ENCODE measurements at regions of chr11 and their contacts with region 1.

Region 1: DNA sequence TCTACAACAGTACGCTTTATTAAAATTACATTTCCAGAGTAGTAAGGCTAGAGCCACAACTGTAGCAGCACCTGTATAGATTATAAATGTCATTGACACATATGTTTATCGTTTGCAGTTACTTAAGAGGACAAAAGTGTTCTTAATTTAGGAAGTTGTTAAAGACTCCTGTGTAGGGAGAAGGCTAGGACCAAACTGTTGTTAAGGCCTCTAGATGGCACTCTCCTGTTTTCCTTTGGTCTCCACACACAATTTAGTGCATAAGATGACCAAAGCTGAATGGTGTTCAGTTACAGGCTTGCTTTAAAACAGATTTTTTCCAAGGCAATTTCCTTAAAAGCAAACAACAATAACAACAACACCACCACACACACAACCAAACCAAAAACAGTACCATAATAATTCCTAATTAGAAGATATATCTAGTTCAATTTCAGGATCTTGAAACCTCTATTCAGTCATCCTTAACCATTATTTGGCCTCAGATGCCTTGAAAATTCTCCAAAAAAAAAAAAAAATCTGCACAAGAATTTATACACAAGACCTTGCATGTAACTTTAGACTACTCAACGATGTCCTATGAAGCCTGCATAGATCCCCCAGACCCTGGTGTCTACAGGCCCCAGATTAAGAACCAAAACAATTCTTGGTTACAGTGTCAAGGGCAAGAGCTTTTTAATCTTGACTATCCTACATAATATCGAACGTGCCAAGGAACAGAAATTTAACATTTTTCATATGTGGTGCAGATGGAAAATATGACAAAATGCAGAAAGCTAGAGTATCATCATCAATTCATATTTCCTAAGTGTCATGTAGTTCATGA is 42.6 kb upstream of the APOA1 start:
- DNase-seq: no peak
- H3K4me3 Mint-ChIP-seq: no peak overlapping the region
- H3K27ac Mint-ChIP-seq: no peak overlapping the region
- H3K4me1 Mint-ChIP-seq: peaks cover 28% of the 10 kb centered on the region
- H3K27me3 Mint-ChIP-seq: no peaks in the 10 kb centered on the region

Region 2: DNA sequence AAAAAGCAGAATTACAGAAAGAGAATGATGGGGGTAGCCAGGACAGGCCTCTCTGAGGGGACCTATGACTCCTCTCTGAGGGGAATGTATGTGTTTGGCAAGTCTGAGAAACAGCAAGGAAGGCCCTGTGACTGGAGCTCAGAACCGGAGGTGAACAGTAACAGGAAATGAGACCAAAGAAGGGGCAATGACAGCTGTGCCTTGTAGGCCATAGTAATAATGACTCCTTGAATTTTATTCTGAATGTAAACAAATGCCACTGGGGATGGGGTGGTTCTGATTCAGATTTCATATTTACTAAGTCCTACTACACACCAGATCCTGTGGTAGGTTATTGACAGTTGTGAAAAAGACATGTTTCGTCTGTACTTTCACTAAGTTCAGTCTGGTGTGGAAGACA is 10.2 kb after region 1 on chr11:
- CTCF ChIA-PET with region 1: interaction called, 18 read pairs
- POLR2A ChIA-PET with region 1: no interaction called
- intact Hi-C with region 1: no loop called
- DNase-seq: peak; percentile 57
- H3K4me3 Mint-ChIP-seq: no peak overlapping the region
- H3K27ac Mint-ChIP-seq: peak overlapping the region; percentile 62
- H3K4me1 Mint-ChIP-seq: peaks cover 20% of the 10 kb centered on the region
- H3K27me3 Mint-ChIP-seq: no peaks in the 10 kb centered on the region

Region 3: DNA sequence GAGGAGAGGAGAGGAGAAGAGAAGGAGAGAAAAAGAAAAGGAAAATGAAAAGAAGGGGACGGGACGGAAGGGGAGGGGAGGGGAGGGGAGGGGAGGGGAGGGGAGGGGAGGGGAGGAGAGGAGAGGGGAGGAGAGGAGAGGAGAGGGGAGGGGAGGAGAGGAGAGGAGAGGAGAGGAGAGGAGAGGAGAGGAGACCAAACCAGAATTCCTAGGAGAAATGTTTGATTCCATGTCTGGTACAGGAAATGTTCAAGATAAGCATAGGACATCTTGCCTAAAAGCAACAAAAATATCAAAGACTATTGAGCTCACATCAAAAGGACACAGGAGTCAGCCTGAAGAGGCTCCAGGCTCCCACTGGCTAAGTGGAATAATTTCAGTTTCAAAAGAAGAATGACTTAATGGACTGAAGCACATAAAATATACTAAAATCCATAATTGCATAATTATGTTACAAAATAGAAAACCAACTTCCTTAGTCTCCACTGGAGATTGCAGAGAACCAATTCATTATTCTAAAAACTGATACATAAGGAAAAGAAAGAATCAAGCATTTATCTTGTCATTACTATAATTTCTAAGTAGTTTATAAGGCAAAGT is 58.6 kb after region 1 on chr11:
- CTCF ChIA-PET with region 1: no interaction called
- POLR2A ChIA-PET with region 1: no interaction called
- intact Hi-C with region 1: no loop called
- DNase-seq: no peak
- H3K4me3 Mint-ChIP-seq: no peak overlapping the region
- H3K27ac Mint-ChIP-seq: no peak overlapping the region
- H3K4me1 Mint-ChIP-seq: peaks cover 12% of the 10 kb centered on the region
- H3K27me3 Mint-ChIP-seq: no peaks in the 10 kb centered on the region

Region 4: DNA sequence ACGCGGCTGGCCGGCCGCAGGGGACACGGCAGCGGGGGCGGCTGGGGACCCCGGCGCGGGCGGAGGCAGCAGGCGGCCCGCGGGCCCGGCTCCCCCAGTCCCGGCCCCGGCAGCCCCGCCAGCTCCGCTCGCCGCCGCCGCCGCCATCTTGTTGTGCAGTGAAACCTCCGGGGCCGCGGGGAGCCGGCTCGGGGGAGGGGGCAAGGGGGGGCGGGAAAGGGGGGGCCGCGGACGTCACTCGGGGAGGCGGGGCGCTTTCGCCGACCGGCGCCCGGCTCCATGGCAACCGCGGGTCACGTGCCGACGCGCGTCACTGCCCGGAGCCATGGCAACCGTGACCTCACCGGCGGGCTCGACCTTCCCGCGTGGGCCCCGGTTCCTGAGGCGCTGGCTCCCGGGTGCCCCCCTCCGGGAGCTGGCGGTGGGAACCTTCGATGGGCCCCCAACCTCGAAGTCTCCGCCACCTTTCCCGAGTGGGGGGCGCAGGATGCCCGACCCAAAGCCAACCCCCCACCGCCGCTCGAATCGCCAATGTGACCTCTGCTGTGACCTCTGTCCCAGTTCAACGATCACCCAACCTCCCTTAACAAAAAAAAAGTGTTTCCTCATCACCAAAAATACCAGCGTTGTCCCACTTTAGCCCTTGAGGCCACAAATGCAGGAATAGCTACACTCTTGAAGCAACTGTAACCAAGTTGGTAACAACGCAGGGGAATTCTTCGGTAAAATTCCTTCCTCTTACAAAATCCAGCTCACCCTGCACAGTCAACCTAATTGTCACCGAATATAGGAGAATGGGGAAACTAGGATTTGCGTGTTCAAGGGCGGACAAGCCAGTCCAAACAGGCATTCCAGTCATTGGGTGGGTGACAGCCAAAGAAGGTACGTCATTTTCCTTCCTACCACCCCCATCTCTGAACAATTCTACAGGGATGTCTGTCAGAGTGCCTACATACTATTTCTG is 218.5 kb after region 1 on chr11 and contains the start of gene SIK3:
- CTCF ChIA-PET with region 1: interaction called, 81 read pairs
- POLR2A ChIA-PET with region 1: interaction called, 5 read pairs
- intact Hi-C with region 1: loop called (anchors 1 kb)
- DNase-seq: peak; percentile 94
- H3K4me3 Mint-ChIP-seq: peak within 1 kb of the TSS; percentile 88
- H3K27ac Mint-ChIP-seq: peak within 1 kb of the TSS; percentile 91
- H3K4me1 Mint-ChIP-seq: peaks cover 43% of the 10 kb centered on the region
- H3K27me3 Mint-ChIP-seq: no peaks in the 10 kb centered on the region
- total RNA-seq, gene SIK3: 26.1 to 26.2 TPM

Measured in activated CD4-positive, alpha-beta memory T cell treated with anti-CD3 and anti-CD28 coated beads for 36 hours (primary cell).